ENCODE measurements at regions of chr1 and their contacts with region 1.

Region 1: GRCh38 chr1:6727535-6727934 is 25.9 kb upstream of the DNAJC11 start:
- DNase-seq: no peak
- H3K4me3 ChIP-seq: no peak overlapping the region
- H3K27ac ChIP-seq: no peak overlapping the region
- H3K4me1 ChIP-seq: peaks cover 0 to 28% (median 17%) of the 10 kb centered on the region in 4 donors
- H3K27me3 ChIP-seq: no peaks in the 10 kb centered on the region
- CTCF ChIP-seq: peak; percentile 73 to 90 (median 75)
- EP300 ChIP-seq: no peak
- POLR2A ChIP-seq: no peak

Region 2: DNA sequence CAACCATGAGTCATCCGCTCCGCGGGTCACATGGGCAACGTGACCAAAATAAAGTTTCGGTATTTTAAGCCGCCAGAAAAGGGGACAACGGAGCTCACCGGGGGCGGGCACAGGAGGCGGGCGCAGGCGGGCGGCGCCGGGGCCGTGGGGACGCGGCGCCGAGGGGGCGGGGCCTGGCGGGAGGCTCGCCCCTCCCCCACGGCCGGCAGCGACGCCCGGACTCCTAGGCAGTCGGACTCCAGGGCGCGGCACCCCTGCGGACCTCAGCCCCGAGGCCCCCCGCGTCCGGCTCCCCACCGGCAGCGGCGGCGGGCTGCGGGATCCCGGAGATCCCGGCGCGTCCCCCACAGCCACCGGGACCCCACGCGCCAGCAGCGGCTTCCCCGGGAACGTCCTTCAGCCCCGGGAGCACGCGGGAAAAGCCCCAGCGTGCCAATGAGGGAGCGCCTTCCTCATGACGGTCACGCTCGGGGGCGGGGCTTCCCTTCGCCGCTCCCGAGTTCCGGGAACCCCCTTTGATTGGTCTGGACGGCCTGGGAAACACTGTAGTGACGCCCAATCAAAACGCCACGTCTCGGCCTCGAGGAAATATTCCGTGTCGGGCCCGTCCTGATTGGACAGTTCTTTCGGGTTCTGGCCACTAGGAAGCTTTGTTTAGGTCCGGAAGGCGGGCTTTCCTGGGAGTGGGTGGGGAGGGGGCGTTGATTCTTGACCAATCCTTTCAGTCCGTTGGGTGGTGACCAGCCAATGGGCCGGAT is 57.2 kb after region 1 on chr1:
- intact Hi-C with region 1: loop called (anchors 5 kb)
- DNase-seq: peak; percentile 100
- H3K4me3 ChIP-seq: peak overlapping the region; percentile 73 to 90 (median 88)
- H3K27ac ChIP-seq: peak overlapping the region; percentile 95 to 100 (median 98)
- H3K4me1 ChIP-seq: peaks cover 20 to 51% (median 46%) of the 10 kb centered on the region in 4 donors
- H3K27me3 ChIP-seq: no peaks in the 10 kb centered on the region
- CTCF ChIP-seq: no peak
- EP300 ChIP-seq: no peak
- POLR2A ChIP-seq: peak; percentile 94

Region 3: DNA sequence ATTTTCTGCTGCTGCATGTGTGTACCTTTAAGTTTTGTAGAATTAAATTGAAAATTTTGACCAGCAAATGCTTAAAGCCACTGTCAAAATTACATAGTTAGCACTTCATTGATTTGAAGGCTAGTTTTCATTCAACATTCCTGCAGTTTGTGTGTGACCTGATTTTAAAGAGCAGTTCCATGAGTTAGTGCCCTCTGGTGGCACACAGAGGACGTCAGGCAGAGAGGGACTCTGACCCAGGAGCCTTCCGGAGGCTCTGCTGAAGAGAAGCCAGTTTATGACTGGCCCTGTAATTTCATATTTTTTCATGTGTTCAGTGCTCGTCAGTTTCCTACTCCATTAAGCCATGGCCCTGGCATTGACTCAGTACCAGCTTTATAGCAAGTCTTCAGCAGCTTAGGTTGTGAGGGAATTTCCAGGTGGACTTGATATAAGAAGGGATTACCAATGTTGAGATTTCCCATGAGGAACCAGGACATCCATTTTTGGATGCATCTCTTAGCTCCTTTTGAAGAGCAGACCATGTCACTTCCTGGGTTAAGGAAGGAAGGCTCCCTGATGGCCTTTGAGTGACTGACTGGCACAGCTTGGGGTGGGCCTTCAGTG is 162.4 kb after region 1 on chr1:
- intact Hi-C with region 1: loop called (anchors 5 kb)
- DNase-seq: no peak
- H3K4me3 ChIP-seq: no peak overlapping the region
- H3K27ac ChIP-seq: no peak overlapping the region
- H3K4me1 ChIP-seq: peaks cover 5 to 13% (median 9%) of the 10 kb centered on the region in 4 donors
- H3K27me3 ChIP-seq: no peaks in the 10 kb centered on the region
- CTCF ChIP-seq: peak; percentile 78 to 83 (median 79)
- EP300 ChIP-seq: no peak
- POLR2A ChIP-seq: no peak

Measured in esophagus muscularis mucosa (tissue), 4 donors.